ENCODE measurements at regions of chr5 and their contacts with region 1.

Region 1: DNA sequence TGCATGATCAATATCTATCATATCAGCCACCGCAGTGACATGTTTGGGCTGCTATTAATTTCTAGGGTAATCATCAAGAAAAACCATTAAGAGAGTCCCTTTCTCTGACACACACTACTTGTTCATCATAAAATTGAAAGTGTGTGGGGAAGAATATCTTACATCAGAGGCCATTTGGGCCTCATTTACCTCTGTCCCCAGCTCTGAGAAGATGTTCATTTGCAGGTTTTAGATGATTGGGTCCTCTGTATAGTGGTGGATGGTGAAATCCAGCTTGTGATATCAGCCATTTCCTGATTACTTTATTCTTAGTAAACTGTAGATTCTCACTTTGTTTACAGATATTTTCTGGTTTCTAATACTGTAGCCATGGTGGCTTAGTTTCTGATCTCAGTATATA is 29.8 kb upstream of the PJA2 start:
- DNase-seq: no peak
- ATAC-seq: no peak
- H3K4me3 ChIP-seq: no peak overlapping the region
- H3K27ac ChIP-seq: no peak overlapping the region
- H3K4me1 ChIP-seq: no peaks in the 10 kb centered on the region
- H3K27me3 ChIP-seq: no peaks in the 10 kb centered on the region
- CTCF ChIP-seq: no peak
- POLR2A ChIP-seq: no peak

Region 2: GRCh38 chr5:108681079-108681921 is 758.3 kb before region 1 on chr5:
- intact Hi-C with region 1: loop called in 2 of 10 experiments (anchors 5 to 10 kb)
- DNase-seq: peak in 2 of 5 donors; percentile 18 to 30
- ATAC-seq: peak; percentile 81 to 97 (median 86)
- H3K4me3 ChIP-seq: peak overlapping the region in 4 of 12 donors; percentile 7 to 34 (median 26)
- H3K27ac ChIP-seq: peak overlapping the region in 4 of 12 donors; percentile 20 to 61 (median 38)
- H3K4me1 ChIP-seq: peaks cover 0 to 5% (median 0%) of the 10 kb centered on the region in 12 donors
- H3K27me3 ChIP-seq: no peaks in the 10 kb centered on the region
- CTCF ChIP-seq: peak; percentile 62 to 89 (median 81)
- POLR2A ChIP-seq: no peak

Measured in heart left ventricle (tissue), 16 donors.